ENCODE measurements at regions of chr10 and their contacts with region 1.

Region 1: DNA sequence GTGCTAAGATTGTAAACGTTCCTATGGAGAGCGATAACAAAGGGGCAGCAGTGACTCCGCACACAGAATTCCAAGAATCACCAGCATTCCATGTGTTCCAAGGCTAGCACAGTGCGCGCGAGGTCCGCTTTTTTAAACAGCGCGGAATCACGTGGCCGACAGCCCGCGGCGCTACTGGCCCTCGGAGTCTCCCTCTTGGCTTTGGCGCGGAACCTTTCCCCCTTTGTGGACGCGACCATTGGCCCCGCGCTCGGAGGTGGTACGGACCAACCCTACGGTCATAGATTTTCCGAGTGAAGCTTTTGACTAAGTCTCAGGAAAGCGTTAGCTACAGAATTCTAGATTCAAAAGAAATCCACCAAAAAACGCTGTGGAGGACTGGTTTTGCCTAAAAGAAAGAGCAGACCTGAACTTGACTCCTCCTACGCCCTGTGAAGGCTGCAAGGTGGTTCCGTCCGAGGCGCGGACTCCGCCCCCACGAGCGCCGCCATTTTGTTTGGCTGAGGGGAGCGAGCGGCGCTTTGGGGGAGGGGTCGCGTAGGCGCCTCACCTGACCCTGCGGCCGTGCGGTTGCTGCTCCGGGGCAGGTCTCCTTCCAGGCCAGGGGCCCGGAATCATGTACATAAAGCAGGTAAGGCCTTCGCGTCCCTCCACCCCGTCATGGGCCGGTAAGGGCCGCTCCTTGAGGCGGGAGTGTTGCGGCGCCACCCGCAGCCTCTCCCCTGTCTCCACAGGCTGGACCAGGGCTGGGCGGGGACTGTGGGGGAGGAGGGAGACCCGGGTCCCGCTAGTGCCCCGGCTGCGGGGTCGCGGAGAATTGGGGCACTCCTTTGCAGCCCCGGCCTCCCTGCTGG is at the start of gene SMC3:
- DNase-seq: peak; percentile 89
- H3K4me3 Mint-ChIP-seq: peak within 1 kb of the TSS; percentile 93
- H3K27ac Mint-ChIP-seq: peak within 1 kb of the TSS; percentile 96
- H3K4me1 Mint-ChIP-seq: peaks cover 44% of the 10 kb centered on the region
- H3K27me3 Mint-ChIP-seq: peaks cover 14% of the 10 kb centered on the region
- total RNA-seq, gene SMC3: 74.5 and 77.9 TPM in 2 replicates

Region 2: GRCh38 chr10:110137142-110137545 is 430.3 kb before region 1 on chr10:
- intact Hi-C with region 1: loop called (anchors 2 kb)
- DNase-seq: no peak
- H3K4me3 Mint-ChIP-seq: no peak overlapping the region
- H3K27ac Mint-ChIP-seq: peak overlapping the region; percentile 1
- H3K4me1 Mint-ChIP-seq: peaks cover 33% of the 10 kb centered on the region
- H3K27me3 Mint-ChIP-seq: no peaks in the 10 kb centered on the region

Region 3: GRCh38 chr10:110311357-110311949 is 256.0 kb before region 1 on chr10:
- intact Hi-C with region 1: loop called (anchors 1 kb)
- DNase-seq: no peak
- H3K4me3 Mint-ChIP-seq: no peak overlapping the region
- H3K27ac Mint-ChIP-seq: no peak overlapping the region
- H3K4me1 Mint-ChIP-seq: peaks cover 51% of the 10 kb centered on the region
- H3K27me3 Mint-ChIP-seq: no peaks in the 10 kb centered on the region

Region 4: DNA sequence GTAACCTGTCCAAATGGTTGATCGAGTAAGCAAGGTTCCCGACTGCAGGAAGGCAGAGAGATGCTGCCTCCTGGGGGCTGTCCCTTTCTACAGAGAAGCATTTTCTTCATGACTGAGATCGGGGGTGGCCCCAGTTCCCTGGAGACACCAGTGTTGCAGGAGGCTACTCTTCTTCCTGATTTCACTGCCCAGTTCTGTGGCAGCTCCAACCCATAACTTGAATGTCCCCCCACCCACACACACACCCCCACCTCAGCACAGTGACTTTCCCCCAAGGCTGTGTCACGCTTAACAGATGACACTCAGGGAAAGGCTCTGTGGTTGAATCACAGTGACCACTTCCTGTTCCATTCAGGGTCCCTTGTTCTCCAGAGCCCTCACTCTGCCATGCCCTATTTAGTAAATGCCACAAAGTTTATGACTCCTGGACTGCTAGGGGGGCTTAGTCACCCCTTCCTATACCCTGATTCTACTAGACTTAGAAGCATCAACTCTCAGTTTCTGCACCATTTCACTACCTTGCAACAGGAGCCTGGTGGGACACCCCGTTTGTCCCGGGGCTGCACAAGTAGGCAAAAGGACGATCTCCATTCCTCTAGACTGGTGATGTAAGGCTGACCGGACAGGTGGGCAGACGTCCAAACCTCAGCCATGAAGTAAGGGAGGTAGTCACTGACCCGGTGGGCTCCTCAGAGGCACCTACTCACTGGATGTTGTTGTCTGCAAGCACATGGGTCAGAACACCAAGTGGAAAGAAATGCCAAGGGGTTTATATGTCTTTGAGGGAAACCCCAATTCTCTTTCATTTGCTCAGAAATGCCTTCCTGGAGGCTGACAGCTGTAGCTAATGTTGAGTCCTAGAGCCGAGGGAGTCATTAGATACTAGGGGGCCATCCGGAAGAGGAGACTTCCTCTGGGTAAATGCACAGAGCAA is 31.2 kb before region 1 on chr10:
- intact Hi-C with region 1: loop called (anchors 1 kb)
- DNase-seq: peak; percentile 49
- H3K4me3 Mint-ChIP-seq: peak overlapping the region; percentile 48
- H3K27ac Mint-ChIP-seq: peak overlapping the region; percentile 89
- H3K4me1 Mint-ChIP-seq: peaks cover 60% of the 10 kb centered on the region
- H3K27me3 Mint-ChIP-seq: no peaks in the 10 kb centered on the region

Region 5: GRCh38 chr10:110600487-110601101 is 33.2 kb after region 1 on chr10:
- intact Hi-C with region 1: loop called (anchors 1 kb)
- DNase-seq: peak; percentile 24
- H3K4me3 Mint-ChIP-seq: no peak overlapping the region
- H3K27ac Mint-ChIP-seq: no peak overlapping the region
- H3K4me1 Mint-ChIP-seq: no peaks in the 10 kb centered on the region
- H3K27me3 Mint-ChIP-seq: no peaks in the 10 kb centered on the region

Region 6: GRCh38 chr10:110643653-110644597 is 76.5 kb after region 1 on chr10 and contains the start of gene RBM20:
- intact Hi-C with region 1: no loop called
- DNase-seq: no peak
- H3K4me3 Mint-ChIP-seq: peak within 1 kb of the TSS; percentile 85
- H3K27ac Mint-ChIP-seq: peak within 1 kb of the TSS; percentile 34
- H3K4me1 Mint-ChIP-seq: peaks cover 27% of the 10 kb centered on the region
- H3K27me3 Mint-ChIP-seq: peaks cover 66% of the 10 kb centered on the region
- total RNA-seq, gene RBM20: not detected in 2 replicates